CD8-positive, alpha-beta T cell (primary cell): ENCODE measurements at regions of chr1 and their contacts with region 1.

Region 1: DNA sequence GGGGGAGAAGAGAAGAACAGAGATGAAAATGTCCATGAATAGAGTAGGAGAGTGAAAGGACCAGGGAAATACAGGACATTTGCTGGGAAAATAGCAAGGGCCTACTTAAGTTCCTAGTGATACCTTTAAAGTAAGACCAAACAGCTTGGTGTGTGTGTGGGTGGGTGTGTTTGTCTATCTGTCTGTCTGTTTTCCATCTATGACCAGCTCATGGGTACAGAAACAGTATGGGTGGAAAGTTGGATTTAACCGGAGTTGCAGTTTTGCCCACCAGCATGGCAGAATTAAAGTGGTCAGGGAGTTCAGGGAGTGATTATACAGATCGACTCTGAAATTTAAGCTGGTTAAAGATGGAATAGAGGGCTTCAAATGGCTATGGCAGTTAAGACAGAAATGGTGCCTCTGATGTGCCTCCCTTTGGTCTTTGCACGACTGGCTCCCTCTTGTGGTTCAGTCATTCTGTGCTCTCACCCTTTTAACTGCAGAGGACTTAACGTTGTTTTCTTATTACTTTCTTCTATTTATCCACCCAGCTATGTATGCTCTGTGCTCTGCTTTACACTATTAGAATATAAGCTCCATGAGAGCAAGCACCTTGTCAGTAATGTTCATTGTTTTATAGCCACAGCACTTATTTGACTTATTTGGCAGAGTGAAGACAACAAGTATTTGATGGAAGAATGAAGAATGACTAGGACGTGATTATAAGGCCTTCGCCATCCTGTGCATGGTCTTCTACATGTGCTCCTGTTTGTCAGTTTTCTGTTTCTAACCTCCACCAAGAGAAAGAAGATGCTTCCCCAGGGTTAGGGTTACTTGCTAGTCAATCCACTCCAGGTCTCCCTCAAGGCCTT is 72.7 kb upstream of the AK4 start:
- DNase-seq: peak; percentile 27 to 88 (median 70)
- ATAC-seq: peak; percentile 98
- H3K4me3 ChIP-seq: no peak overlapping the region
- H3K4me3 Mint-ChIP-seq: no peak overlapping the region
- H3K27ac ChIP-seq: no peak overlapping the region
- H3K27ac Mint-ChIP-seq: no peak overlapping the region
- H3K4me1 ChIP-seq: no peaks in the 10 kb centered on the region
- H3K4me1 Mint-ChIP-seq: peaks cover 19% of the 10 kb centered on the region
- H3K27me3 ChIP-seq: no peaks in the 10 kb centered on the region
- H3K27me3 Mint-ChIP-seq: peaks cover 2% of the 10 kb centered on the region
- CTCF ChIP-seq: peak; percentile 74

Region 2: DNA sequence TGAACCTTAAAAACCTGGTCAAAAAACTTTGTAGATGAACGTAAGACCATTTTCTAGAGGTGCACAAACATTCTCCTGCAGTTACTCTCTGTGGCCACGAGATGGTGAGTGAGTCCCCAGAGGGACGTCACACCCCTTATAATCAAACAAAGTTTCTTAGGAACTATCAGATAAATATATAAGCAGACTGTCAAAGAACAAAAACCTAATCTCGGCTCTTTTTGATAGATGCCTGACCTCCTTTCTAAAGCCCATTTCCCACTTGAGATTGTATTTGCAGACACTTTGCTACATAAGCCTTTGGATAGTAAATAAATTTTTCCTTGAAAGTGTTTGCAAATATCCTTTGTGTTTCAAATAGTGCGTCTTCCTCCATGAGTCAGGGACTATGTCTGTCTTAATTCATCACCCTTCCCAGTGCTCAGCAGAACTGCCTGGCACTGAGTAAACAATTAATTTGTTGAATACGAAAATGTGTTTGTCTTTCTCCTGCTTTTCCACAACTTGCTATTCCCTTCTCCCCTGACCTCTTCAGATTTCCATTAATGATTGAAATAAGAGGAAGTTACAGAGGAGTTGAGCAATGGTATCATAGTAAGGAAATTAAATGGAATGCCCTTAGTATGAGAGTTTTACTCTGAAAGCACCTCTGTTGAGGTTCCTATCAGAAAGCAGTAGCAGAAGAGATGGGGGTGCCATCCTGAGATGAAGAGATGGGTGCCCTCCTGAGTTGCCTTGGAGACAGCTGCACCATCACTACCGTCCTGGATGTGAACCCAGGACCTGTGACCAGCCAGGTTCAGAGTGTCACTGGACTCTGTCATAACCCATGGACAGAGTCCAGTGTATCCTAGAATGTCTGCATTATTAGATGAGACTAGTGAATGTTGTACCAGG is 388.3 kb before region 1 on chr1:
- CTCF ChIA-PET with region 1: interaction called, 5 read pairs
- POLR2A ChIA-PET with region 1: no interaction called
- intact Hi-C with region 1: loop called (anchors 1 to 2 kb)
- DNase-seq: peak in 5 of 9 experiments; percentile 5 to 65 (median 28)
- ATAC-seq: peak; percentile 79
- H3K4me3 ChIP-seq: no peak overlapping the region
- H3K4me3 Mint-ChIP-seq: no peak overlapping the region
- H3K27ac ChIP-seq: no peak overlapping the region
- H3K27ac Mint-ChIP-seq: no peak overlapping the region
- H3K4me1 ChIP-seq: no peaks in the 10 kb centered on the region
- H3K4me1 Mint-ChIP-seq: no peaks in the 10 kb centered on the region
- H3K27me3 ChIP-seq: no peaks in the 10 kb centered on the region
- H3K27me3 Mint-ChIP-seq: no peaks in the 10 kb centered on the region
- CTCF ChIP-seq: peak; percentile 86

Region 3: GRCh38 chr1:64864018-64864940 is 211.1 kb before region 1 on chr1:
- CTCF ChIA-PET with region 1: interaction called, 5 read pairs
- POLR2A ChIA-PET with region 1: interaction called, 4 read pairs
- intact Hi-C with region 1: loop called (anchors 1 to 5 kb)
- DNase-seq: peak; percentile 11 to 92 (median 57)
- ATAC-seq: peak; percentile 82
- H3K4me3 ChIP-seq: no peak overlapping the region
- H3K4me3 Mint-ChIP-seq: peak overlapping the region; percentile 37
- H3K27ac ChIP-seq: peak overlapping the region in 1 of 2 experiments; percentile 83
- H3K27ac Mint-ChIP-seq: peak overlapping the region; percentile 79
- H3K4me1 ChIP-seq: peaks cover 19% of the 10 kb centered on the region
- H3K4me1 Mint-ChIP-seq: peaks cover 44% of the 10 kb centered on the region
- H3K27me3 ChIP-seq: no peaks in the 10 kb centered on the region
- H3K27me3 Mint-ChIP-seq: no peaks in the 10 kb centered on the region
- CTCF ChIP-seq: no peak

Region 4: DNA sequence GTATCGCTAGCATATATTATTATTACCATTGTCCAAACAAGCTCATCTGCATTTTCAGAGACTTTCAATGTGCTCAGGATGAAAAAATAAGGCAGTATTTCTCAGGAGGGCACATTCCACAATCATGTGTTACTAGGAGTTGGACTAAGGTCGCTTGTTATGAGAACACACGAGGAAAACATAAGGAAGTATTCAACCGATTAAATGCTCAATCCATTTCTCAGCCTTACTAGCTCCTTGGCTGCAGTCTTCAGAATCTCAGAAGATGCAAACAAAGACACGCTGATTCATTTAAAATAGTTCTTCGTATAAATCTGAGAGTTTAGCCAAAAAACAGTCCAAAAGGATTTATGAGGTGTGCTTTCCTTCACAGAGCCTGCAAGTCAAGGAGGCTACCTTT is 27.0 kb before region 1 on chr1:
- CTCF ChIA-PET with region 1: interaction called, 25 read pairs
- POLR2A ChIA-PET with region 1: interaction called, 3 read pairs
- intact Hi-C with region 1: no loop called
- DNase-seq: no peak
- ATAC-seq: no peak
- H3K4me3 ChIP-seq: no peak overlapping the region
- H3K4me3 Mint-ChIP-seq: no peak overlapping the region
- H3K27ac ChIP-seq: no peak overlapping the region
- H3K27ac Mint-ChIP-seq: no peak overlapping the region
- H3K4me1 ChIP-seq: peaks cover 26% of the 10 kb centered on the region
- H3K4me1 Mint-ChIP-seq: peaks cover 63% of the 10 kb centered on the region
- H3K27me3 ChIP-seq: no peaks in the 10 kb centered on the region
- H3K27me3 Mint-ChIP-seq: no peaks in the 10 kb centered on the region
- CTCF ChIP-seq: no peak

Region 5: GRCh38 chr1:65419681-65420589 is 344.6 kb after region 1 on chr1:
- CTCF ChIA-PET with region 1: no interaction called
- POLR2A ChIA-PET with region 1: interaction called, 3 read pairs
- intact Hi-C with region 1: loop called in 1 of 2 experiments (anchors 2 kb)
- DNase-seq: peak; percentile 97 to 99 (median 98)
- ATAC-seq: peak; percentile 94
- H3K4me3 ChIP-seq: peak overlapping the region; percentile 96 to 98
- H3K4me3 Mint-ChIP-seq: no peak overlapping the region
- H3K27ac ChIP-seq: peak overlapping the region; percentile 69 to 71
- H3K27ac Mint-ChIP-seq: peak overlapping the region; percentile 93
- H3K4me1 ChIP-seq: peaks cover 15% of the 10 kb centered on the region
- H3K4me1 Mint-ChIP-seq: peaks cover 21% of the 10 kb centered on the region
- H3K27me3 ChIP-seq: peaks cover 0 to 3% of the 10 kb centered on the region in 2 experiments
- H3K27me3 Mint-ChIP-seq: no peaks in the 10 kb centered on the region
- CTCF ChIP-seq: no peak